Activated B cell treated with CpG ODN at 0.5 μM for 24 hours (primary cell): ENCODE measurements at regions of chr2 and their contacts with region 1.

Region 1: DNA sequence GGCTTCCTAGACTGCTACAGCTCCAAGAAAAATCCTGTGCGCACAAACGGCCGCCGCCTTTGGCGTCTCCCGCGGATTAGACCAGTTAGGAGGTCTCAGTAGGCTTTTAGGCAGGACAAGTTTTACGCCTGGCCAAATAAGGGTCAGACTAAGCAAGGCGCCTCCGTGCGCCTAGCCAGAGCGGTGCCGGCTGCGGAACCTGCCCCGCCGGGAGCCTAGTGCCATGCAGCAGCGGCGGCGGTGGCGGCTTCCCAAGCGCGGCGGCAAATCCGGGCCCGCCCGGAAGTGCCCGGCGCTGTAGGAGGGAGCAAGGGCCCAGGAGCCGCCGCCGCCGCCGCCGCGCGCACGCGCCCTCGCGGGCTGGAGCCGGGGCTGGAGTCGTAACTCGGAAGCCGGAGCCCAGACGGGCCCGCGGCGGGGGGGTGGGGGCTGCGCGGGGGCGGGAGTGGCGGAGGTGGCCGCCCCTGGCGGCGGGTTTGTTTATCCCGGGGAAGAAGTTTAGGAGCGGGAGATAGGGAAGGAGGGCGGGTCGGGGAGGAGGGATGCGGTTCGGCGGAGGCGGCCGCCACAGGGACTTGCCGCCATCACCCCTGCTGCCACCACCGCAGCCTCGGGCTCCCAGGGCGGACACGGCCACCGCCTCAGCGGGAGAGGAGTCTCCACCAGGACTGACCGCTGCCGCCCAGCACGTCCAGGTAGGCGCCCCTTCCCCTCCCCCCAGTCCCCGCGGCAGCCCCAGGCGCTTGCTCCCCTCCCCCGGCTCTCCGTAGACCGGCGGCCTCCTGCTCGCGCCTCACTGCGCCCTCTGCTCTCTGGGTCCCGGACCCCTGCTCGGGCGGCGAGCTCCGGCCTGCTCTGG is at the start of gene SPOPL:
- DNase-seq: peak; percentile 88
- ATAC-seq: peak; percentile 79
- H3K4me3 Mint-ChIP-seq: peak within 1 kb of the TSS; percentile 99
- H3K27ac Mint-ChIP-seq: peak within 1 kb of the TSS; percentile 96
- H3K4me1 Mint-ChIP-seq: peaks cover 48% of the 10 kb centered on the region
- H3K27me3 Mint-ChIP-seq: no peaks in the 10 kb centered on the region
- CTCF ChIP-seq: no peak
- total RNA-seq, gene SPOPL: 32.5 and 36.9 TPM in 2 replicates

Region 2: DNA sequence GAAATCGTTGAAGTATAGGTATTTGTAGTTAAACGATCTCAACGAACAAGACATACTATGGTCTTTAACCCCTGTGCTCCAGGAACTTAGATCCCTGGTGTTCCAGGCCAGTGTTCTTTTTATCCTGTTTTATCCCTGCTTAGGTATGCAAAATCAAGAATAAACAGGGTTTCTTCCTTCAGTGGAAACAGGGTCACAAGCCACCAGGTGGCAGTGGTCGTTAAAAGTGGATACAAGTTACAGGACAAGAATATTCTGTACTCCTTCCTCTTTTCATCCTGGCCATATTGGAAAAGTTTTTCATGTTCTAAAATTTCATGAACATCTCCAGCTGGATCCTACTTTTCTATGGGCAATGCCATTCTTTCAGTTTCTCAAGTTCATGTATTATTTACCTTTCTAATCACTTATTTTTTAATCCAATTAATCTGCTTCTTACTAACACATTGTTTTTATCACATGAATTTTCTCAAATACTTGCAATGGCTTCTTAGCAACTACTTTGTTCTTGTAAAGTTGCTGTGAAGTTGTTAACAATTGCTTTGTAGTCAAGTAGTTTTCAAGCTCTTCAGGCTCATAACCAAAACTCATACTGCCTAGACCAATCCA is 553.8 kb before region 1 on chr2:
- CTCF ChIA-PET with region 1: no interaction called
- POLR2A ChIA-PET with region 1: no interaction called
- intact Hi-C with region 1: loop called (anchors 5 kb)
- DNase-seq: no peak
- ATAC-seq: no peak
- H3K4me3 Mint-ChIP-seq: no peak overlapping the region
- H3K27ac Mint-ChIP-seq: no peak overlapping the region
- H3K4me1 Mint-ChIP-seq: peaks cover 7% of the 10 kb centered on the region
- H3K27me3 Mint-ChIP-seq: no peaks in the 10 kb centered on the region
- CTCF ChIP-seq: no peak

Region 3: GRCh38 chr2:138475277-138475776 is 26.3 kb before region 1 on chr2:
- CTCF ChIA-PET with region 1: no interaction called
- POLR2A ChIA-PET with region 1: interaction called, 5 read pairs
- intact Hi-C with region 1: loop called (anchors 2 kb)
- DNase-seq: no peak
- ATAC-seq: peak; percentile 76
- H3K4me3 Mint-ChIP-seq: peak overlapping the region; percentile 36
- H3K27ac Mint-ChIP-seq: peak overlapping the region; percentile 51
- H3K4me1 Mint-ChIP-seq: peaks cover 27% of the 10 kb centered on the region
- H3K27me3 Mint-ChIP-seq: no peaks in the 10 kb centered on the region
- CTCF ChIP-seq: no peak

Region 4: DNA sequence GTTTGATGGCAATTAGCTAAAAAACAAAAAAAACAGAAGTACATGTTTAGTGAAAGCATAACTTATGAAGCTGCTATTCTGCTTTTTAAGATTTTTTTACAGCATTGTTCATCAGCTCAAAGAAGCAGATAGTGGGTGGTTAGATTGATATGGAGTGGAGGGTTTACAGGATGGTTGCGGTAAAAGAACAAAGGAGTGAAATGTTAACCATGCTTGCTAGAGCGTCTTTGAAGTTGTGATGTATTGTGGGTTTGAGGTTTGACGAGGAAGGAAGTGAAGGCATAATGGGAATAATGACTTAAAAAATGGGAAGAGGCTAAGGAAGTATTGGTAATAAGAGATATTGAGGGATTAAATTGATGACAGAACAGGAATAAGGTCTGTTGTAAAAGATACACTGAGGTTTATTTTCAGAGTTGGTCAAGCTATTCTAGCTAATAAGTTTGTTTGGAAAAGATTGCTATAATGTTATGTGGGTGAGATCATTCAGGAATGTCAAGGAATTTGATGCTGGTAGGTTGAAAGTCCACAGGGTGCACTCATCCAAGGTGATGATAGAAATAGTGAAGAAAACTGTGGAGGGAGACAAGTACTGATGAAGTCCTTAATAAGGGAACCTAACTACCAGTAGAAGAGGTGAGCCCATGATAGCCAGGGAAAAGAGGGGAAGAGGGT is 14.5 kb after region 1 on chr2:
- CTCF ChIA-PET with region 1: no interaction called
- POLR2A ChIA-PET with region 1: interaction called, 4 read pairs
- intact Hi-C with region 1: loop called (anchors 1 kb)
- DNase-seq: no peak
- ATAC-seq: no peak
- H3K4me3 Mint-ChIP-seq: peak overlapping the region; percentile 2
- H3K27ac Mint-ChIP-seq: no peak overlapping the region
- H3K4me1 Mint-ChIP-seq: peaks cover 76% of the 10 kb centered on the region
- H3K27me3 Mint-ChIP-seq: no peaks in the 10 kb centered on the region
- CTCF ChIP-seq: no peak

Region 5: DNA sequence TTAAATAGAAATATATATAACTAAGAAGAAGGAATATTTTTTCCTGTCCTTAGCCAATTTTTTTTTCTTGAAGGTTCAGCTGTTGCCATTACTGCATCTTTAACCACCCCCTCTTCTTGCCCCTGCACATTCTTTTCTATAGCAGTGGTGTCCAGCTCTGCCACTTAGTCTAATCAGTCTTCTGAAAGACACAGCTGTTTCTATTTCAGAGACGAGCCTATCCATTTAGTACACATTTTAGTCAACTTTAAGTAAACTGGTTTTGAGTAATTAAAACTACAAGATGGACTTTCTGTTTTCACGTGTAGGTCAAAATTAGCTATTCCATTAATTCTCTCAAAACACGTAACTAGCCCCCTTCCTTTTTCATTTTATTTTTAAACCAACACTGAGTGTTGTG is 20.9 kb after region 1 on chr2:
- CTCF ChIA-PET with region 1: interaction called, 3 read pairs
- POLR2A ChIA-PET with region 1: interaction called, 28 read pairs
- intact Hi-C with region 1: loop called (anchors 1 kb)
- DNase-seq: no peak
- ATAC-seq: no peak
- H3K4me3 Mint-ChIP-seq: peak overlapping the region; percentile 33
- H3K27ac Mint-ChIP-seq: peak overlapping the region; percentile 72
- H3K4me1 Mint-ChIP-seq: peaks cover 83% of the 10 kb centered on the region
- H3K27me3 Mint-ChIP-seq: no peaks in the 10 kb centered on the region
- CTCF ChIP-seq: no peak

Region 6: DNA sequence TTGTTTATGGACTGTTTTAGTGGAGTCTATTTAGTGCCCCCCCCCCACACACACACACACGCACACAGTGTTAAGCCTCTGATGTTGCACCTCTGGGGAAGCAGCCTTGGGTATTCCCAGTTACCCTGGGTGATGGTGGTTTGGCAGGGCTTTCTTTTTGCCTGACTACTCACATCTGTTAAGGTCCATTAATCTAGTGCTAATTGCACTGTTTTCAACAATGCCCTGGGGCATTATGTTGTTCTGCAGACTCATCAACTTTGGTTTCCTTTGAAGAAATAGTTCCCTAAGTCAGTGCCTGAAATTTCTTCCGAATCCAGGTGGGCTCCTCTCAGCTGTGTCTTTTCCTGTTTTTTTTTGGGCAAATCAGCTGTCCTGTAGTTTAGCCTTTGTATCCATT is 34.6 kb after region 1 on chr2:
- CTCF ChIA-PET with region 1: interaction called, 4 read pairs
- POLR2A ChIA-PET with region 1: no interaction called
- intact Hi-C with region 1: loop called (anchors 2 kb)
- DNase-seq: no peak
- ATAC-seq: peak; percentile 93
- H3K4me3 Mint-ChIP-seq: peak overlapping the region; percentile 55
- H3K27ac Mint-ChIP-seq: peak overlapping the region; percentile 59
- H3K4me1 Mint-ChIP-seq: peaks cover 74% of the 10 kb centered on the region
- H3K27me3 Mint-ChIP-seq: no peaks in the 10 kb centered on the region
- CTCF ChIP-seq: no peak

Region 7: GRCh38 chr2:138548796-138549195 is 47.1 kb after region 1 on chr2:
- CTCF ChIA-PET with region 1: no interaction called
- POLR2A ChIA-PET with region 1: interaction called, 3 read pairs
- intact Hi-C with region 1: loop called (anchors 2 kb)
- DNase-seq: no peak
- ATAC-seq: no peak
- H3K4me3 Mint-ChIP-seq: no peak overlapping the region
- H3K27ac Mint-ChIP-seq: no peak overlapping the region
- H3K4me1 Mint-ChIP-seq: peaks cover 41% of the 10 kb centered on the region
- H3K27me3 Mint-ChIP-seq: no peaks in the 10 kb centered on the region
- CTCF ChIP-seq: no peak